AG04450 (cell line): ENCODE measurements at regions of chr12 and their contacts with region 1.

Region 1: DNA sequence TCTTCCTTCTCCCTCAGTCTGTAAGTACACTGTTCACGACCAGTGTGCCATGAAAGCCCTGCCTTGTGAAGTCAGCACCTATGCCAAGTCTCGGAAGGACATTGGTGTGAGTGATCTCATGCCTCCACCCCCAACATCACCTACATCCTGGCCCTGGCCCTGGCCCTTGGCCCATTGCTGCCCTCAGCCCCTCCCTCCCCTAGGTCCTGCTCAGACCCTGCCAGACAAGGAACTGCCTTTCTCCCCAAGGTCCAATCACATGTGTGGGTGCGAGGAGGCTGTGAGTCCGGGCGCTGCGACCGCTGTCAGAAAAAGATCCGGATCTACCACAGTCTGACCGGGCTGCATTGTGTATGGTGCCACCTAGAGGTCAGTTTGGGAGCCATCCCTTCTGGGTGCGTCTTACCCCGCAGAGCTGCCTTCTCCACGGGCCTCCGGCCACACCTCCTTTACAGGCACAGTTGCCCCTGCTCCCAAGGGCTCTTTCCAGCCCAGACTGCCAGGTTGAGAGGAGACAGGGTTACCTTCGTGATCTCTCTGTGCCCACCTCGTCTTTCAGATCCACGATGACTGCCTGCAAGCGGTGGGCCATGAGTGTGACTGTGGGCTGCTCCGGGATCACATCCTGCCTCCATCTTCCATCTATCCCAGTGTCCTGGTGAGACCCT is 9.2 kb downstream of the DGKA start:
- DNase-seq: peak; percentile 60
- H3K4me3 ChIP-seq: no peak overlapping the region; the same call in 1 of the 2 replicates
- H3K27ac ChIP-seq: no peak overlapping the region
- H3K27me3 ChIP-seq: no peaks in the 10 kb centered on the region
- CTCF ChIP-seq: peak; percentile 93

Region 2: DNA sequence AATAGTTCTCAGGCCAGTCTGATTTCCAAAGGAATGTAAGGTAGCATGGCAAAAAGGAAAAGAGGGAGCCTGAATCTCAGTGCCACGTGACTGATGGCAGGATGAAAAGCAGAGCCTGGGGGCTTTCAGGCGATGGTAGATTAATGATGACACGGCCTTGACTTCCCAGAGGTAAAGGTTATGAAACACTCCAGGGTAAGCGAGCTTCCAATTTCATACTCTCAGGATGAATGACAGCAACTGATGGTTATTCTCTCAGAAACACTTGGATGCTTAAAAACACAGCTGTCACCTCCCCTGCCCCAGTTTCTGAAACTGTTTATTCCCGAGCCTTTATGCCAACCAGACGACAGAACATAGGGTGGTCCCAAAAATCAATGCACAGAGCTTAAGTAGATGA is 168.5 kb before region 1 on chr12:
- CTCF ChIA-PET with region 1: interaction called, 10 read pairs
- POLR2A ChIA-PET with region 1: no interaction called
- DNase-seq: no peak
- H3K4me3 ChIP-seq: no peak overlapping the region
- H3K27ac ChIP-seq: no peak overlapping the region
- H3K27me3 ChIP-seq: no peaks in the 10 kb centered on the region
- CTCF ChIP-seq: no peak

Region 3: DNA sequence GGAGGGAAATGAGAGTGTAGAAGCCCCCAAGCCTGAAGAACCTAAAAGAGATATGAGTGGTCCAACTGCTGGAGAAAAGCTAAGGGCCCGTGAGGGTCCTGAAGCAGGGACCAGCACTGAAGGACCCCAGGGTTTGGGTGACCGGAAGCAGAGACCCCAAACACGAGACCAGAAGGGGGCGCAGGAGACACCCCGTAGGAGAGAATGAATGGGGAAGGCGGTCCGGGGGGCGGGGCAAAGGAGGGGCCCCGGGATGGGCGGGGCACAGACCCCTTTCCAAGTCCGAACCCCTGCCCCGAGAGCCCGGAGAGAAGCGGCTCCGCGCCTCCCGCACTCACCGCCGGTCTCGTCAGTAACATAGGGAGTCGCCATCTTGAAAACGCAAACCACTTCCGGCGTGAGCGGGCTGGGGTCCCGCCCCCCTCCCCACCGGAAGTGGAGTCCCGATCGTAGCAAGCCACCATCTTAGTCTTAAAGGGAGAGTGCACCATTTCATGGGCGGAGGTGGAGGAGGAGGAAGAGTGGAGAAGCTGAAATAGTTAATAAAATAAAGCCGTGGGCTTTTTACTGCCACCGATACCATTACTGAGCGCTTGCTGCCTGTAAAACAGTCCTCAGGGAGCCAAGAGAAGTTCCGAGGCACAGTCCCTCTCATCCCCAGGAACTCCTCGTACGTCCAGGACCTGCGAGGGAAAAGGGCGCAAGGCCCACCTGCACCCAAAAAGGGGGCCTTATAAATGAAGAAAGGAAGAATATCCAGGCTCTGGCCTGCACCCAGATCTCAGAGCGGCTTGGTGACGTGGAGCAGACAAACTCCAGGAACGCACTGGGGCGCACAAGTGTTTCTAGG is 13.2 kb before region 1 on chr12:
- CTCF ChIA-PET with region 1: interaction called, 33 read pairs
- POLR2A ChIA-PET with region 1: interaction called, 4 read pairs
- DNase-seq: peak; percentile 74
- H3K4me3 ChIP-seq: peak overlapping the region; percentile 97
- H3K27ac ChIP-seq: peak overlapping the region; percentile 93
- H3K27me3 ChIP-seq: no peaks in the 10 kb centered on the region
- CTCF ChIP-seq: peak; percentile 86

Region 4: GRCh38 chr12:55955344-55955743 is 15.1 kb after region 1 on chr12:
- CTCF ChIA-PET with region 1: interaction called, 10 read pairs
- POLR2A ChIA-PET with region 1: no interaction called
- DNase-seq: no peak
- H3K4me3 ChIP-seq: no peak overlapping the region
- H3K27ac ChIP-seq: no peak overlapping the region
- H3K27me3 ChIP-seq: peaks cover 2% of the 10 kb centered on the region
- CTCF ChIP-seq: no peak

Region 5: GRCh38 chr12:55973598-55974307 is 33.6 kb after region 1 on chr12 and contains the start of gene RAB5B:
- CTCF ChIA-PET with region 1: interaction called, 11 read pairs
- POLR2A ChIA-PET with region 1: interaction called, 7 read pairs
- DNase-seq: peak; percentile 100
- H3K4me3 ChIP-seq: peak within 1 kb of the TSS; percentile 94
- H3K27ac ChIP-seq: peak within 1 kb of the TSS; percentile 87
- H3K27me3 ChIP-seq: no peaks in the 10 kb centered on the region
- CTCF ChIP-seq: peak; percentile 29; the same call in 1 of the 2 replicates
- polyA plus RNA-seq, gene RAB5B: 136 and 157 TPM in 2 replicates